Heart right ventricle (tissue), 16 donors: ENCODE measurements at regions of chr15 and their contacts with region 1.

Region 1: DNA sequence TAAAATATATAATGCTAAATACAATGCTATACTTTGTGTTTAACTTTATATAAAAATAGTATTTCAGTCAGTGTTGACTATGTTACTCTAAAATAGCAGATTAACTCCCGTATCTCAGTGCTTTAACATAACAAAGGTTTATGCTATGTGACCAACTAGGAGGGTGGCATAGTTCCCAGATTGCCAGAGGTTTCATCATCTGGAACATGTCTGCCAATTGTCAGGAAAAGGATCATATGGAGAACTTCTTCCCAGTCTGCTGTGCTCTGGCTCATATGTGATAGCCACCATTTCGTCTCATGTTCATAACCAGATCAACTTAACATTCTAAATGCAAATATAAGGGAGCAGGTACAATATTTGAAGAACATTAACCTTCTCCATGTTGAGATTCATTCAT is 720.2 kb downstream of the MCTP2 start:
- DNase-seq: no peak
- ATAC-seq: no peak
- H3K4me3 ChIP-seq: no peak overlapping the region
- H3K27ac ChIP-seq: no peak overlapping the region
- H3K4me1 ChIP-seq: no peaks in the 10 kb centered on the region
- H3K27me3 ChIP-seq: no peaks in the 10 kb centered on the region
- CTCF ChIP-seq: no peak

Region 2: GRCh38 chr15:94829887-94830884 is 121.4 kb before region 1 on chr15:
- intact Hi-C with region 1: no loop called
- DNase-seq: no peak
- ATAC-seq: no peak
- H3K4me3 ChIP-seq: no peak overlapping the region
- H3K27ac ChIP-seq: no peak overlapping the region
- H3K4me1 ChIP-seq: no peaks in the 10 kb centered on the region
- H3K27me3 ChIP-seq: peaks cover 0 to 17% (median 0%) of the 10 kb centered on the region in 7 donors
- CTCF ChIP-seq: no peak

Region 3: DNA sequence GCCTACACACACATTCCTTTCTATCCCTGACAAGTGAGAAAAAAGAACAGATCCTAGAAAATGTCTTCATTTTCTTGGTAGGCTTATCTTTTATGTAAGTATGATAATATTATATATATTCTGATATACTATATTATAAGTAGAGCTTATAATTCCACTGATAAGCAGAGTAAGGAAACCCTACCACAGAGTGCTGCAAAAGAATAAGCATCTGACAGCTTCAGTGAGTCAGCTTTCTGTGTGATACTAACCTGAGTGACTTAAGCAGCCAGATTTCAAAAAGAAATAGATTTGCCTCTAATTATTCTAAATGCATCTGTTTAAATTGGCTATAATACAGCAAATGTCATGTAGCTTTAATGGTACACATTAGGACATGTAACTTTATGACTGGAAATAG is 64.1 kb before region 1 on chr15:
- intact Hi-C with region 1: no loop called
- DNase-seq: no peak
- ATAC-seq: no peak
- H3K4me3 ChIP-seq: no peak overlapping the region
- H3K27ac ChIP-seq: no peak overlapping the region
- H3K4me1 ChIP-seq: no peaks in the 10 kb centered on the region
- H3K27me3 ChIP-seq: no peaks in the 10 kb centered on the region
- CTCF ChIP-seq: no peak

Region 4: GRCh38 chr15:94910166-94910565 is 41.4 kb before region 1 on chr15:
- intact Hi-C with region 1: no loop called
- DNase-seq: no peak
- ATAC-seq: no peak
- H3K4me3 ChIP-seq: no peak overlapping the region
- H3K27ac ChIP-seq: no peak overlapping the region
- H3K4me1 ChIP-seq: no peaks in the 10 kb centered on the region
- H3K27me3 ChIP-seq: no peaks in the 10 kb centered on the region
- CTCF ChIP-seq: no peak

Region 5: GRCh38 chr15:95018888-95019545 is 67.5 kb after region 1 on chr15:
- intact Hi-C with region 1: loop called in 1 of 10 experiments (anchors 10 kb)
- DNase-seq: no peak
- ATAC-seq: peak in 6 of 8 donors; percentile 14 to 85 (median 77)
- H3K4me3 ChIP-seq: no peak overlapping the region
- H3K27ac ChIP-seq: peak overlapping the region in 3 of 10 donors; percentile 28 to 45 (median 42)
- H3K4me1 ChIP-seq: peaks cover 0 to 35% (median 23%) of the 10 kb centered on the region in 9 donors
- H3K27me3 ChIP-seq: no peaks in the 10 kb centered on the region
- CTCF ChIP-seq: no peak